Heart left ventricle (tissue), 16 donors: ENCODE measurements at regions of chr17 and their contacts with region 1.

Region 1: DNA sequence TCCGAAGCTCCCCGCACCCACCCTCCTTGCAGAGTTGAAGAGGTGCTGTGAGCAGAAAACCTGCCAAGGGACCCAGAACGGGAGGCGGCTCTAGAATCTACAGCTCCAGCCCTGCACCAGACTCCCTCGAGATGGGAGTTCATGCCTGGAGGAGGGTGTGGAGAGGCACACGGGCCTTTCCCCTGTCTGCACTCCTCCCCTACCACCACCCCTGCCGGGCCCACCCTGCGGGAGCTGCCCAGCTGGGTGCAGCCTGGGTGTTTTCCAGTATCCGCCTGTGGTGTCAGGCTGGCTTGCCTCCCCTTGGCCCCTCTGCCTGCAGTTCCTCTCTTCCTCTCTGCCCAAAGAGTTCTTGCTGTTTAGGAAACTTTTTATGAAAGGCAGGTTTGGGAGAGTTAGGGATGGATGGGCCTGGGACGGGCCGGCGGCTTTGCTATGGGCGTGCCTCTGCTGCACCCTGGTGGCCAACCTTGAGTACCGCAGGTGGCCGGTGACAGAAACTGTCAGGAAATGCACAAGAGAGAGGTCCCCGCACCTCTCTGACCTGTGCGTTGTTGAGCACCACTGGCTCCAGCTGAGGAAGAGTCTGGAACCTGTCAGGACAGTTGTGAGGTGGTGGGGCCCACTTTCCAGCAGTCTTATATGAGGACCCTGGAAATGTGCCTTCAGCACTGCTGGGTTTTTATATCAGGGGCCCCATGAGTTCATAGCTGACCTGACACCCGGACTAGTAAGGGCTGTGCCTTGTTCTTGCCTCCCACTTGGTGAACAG is 354.1 kb downstream of the SEC14L1 start:
- DNase-seq: peak; percentile 72 to 89 (median 78)
- ATAC-seq: peak; percentile 36 to 73 (median 70)
- H3K4me3 ChIP-seq: no peak overlapping the region
- H3K27ac ChIP-seq: peak overlapping the region in 2 of 12 donors; percentile 15 to 76
- H3K4me1 ChIP-seq: peaks cover 0 to 32% (median 18%) of the 10 kb centered on the region in 12 donors
- H3K27me3 ChIP-seq: no peaks in the 10 kb centered on the region
- CTCF ChIP-seq: peak; percentile 97 to 100 (median 98)
- POLR2A ChIP-seq: no peak

Region 2: GRCh38 chr17:77088455-77089123 is 406.3 kb before region 1 on chr17:
- intact Hi-C with region 1: loop called in 2 of 10 experiments (anchors 10 kb)
- DNase-seq: peak; percentile 93 to 95 (median 95)
- ATAC-seq: peak; percentile 94 to 96 (median 94)
- H3K4me3 ChIP-seq: peak overlapping the region; percentile 31 to 94 (median 74)
- H3K27ac ChIP-seq: peak overlapping the region; percentile 69 to 96 (median 89)
- H3K4me1 ChIP-seq: peaks cover 2 to 42% (median 25%) of the 10 kb centered on the region in 12 donors
- H3K27me3 ChIP-seq: peaks cover 0 to 2% (median 0%) of the 10 kb centered on the region in 9 donors
- CTCF ChIP-seq: peak; percentile 59 to 96 (median 81)
- POLR2A ChIP-seq: peak in 1 of 2 donors; percentile 65

Region 3: GRCh38 chr17:77331301-77331864 is 163.5 kb before region 1 on chr17:
- intact Hi-C with region 1: loop called (anchors 1 to 2 kb)
- DNase-seq: peak; percentile 91 to 96 (median 92)
- ATAC-seq: peak; percentile 74 to 92 (median 88)
- H3K4me3 ChIP-seq: peak overlapping the region in 7 of 12 donors; percentile 21 to 45 (median 41)
- H3K27ac ChIP-seq: peak overlapping the region in 9 of 12 donors; percentile 2 to 85 (median 55)
- H3K4me1 ChIP-seq: peaks cover 0 to 31% (median 9%) of the 10 kb centered on the region in 12 donors
- H3K27me3 ChIP-seq: no peaks in the 10 kb centered on the region
- CTCF ChIP-seq: peak; percentile 93 to 98 (median 94)
- POLR2A ChIP-seq: no peak

Region 4: DNA sequence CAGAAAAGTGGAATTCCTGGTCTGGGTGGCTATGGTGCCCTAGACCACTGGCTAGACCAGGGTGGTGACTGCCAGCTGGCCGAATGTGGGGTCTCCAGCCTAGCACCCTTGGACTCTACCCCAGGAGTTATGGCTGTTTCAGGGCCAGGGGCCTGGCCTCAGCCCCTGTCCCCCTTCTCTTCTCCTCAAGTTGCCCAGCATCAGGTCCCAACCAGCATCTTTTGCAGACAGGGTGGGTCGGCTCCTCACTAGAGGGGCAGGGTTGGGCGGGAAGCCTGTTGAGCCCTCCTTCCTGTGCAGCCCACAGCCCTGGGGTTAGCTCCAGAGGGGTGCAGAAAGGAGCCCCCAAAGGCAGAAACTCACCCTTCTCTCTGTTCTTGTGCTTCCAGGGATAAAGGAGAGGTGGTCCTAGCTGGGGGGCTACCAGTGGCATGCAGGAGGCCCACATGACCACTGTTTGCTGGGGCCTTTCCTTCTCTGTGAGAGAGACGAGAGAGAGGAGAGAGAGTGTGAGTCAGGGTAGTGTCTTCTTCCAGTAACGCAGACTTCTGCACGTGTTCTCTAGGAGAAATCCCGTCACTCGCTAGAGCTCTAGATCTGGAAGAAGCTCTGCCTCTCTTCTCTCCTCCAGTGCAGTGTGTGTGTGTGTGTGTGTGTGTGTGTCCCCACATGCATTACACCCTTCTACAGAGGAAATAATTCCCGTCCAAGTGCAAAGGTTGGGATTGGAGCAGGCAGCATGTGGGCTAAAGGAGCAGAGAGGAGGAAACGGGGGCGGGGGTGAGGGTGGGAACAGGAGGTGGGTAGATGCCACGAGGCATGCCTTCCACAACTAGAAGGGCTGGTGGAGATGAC is 144.6 kb before region 1 on chr17:
- intact Hi-C with region 1: loop called in 1 of 10 experiments (anchors 5 kb)
- DNase-seq: peak in 3 of 5 donors; percentile 30 to 55 (median 32)
- ATAC-seq: peak; percentile 3 to 29 (median 28)
- H3K4me3 ChIP-seq: no peak overlapping the region
- H3K27ac ChIP-seq: peak overlapping the region in 8 of 12 donors; percentile 33 to 86 (median 72)
- H3K4me1 ChIP-seq: peaks cover 6 to 56% (median 38%) of the 10 kb centered on the region in 12 donors
- H3K27me3 ChIP-seq: no peaks in the 10 kb centered on the region
- CTCF ChIP-seq: no peak
- POLR2A ChIP-seq: no peak

Region 5: GRCh38 chr17:77419547-77420094 is 75.2 kb before region 1 on chr17:
- intact Hi-C with region 1: no loop called
- DNase-seq: no peak
- ATAC-seq: no peak
- H3K4me3 ChIP-seq: no peak overlapping the region
- H3K27ac ChIP-seq: peak overlapping the region in 10 of 12 donors; percentile 6 to 97 (median 58)
- H3K4me1 ChIP-seq: peaks cover 26 to 64% (median 54%) of the 10 kb centered on the region in 12 donors
- H3K27me3 ChIP-seq: no peaks in the 10 kb centered on the region
- CTCF ChIP-seq: no peak
- POLR2A ChIP-seq: no peak

Region 6: DNA sequence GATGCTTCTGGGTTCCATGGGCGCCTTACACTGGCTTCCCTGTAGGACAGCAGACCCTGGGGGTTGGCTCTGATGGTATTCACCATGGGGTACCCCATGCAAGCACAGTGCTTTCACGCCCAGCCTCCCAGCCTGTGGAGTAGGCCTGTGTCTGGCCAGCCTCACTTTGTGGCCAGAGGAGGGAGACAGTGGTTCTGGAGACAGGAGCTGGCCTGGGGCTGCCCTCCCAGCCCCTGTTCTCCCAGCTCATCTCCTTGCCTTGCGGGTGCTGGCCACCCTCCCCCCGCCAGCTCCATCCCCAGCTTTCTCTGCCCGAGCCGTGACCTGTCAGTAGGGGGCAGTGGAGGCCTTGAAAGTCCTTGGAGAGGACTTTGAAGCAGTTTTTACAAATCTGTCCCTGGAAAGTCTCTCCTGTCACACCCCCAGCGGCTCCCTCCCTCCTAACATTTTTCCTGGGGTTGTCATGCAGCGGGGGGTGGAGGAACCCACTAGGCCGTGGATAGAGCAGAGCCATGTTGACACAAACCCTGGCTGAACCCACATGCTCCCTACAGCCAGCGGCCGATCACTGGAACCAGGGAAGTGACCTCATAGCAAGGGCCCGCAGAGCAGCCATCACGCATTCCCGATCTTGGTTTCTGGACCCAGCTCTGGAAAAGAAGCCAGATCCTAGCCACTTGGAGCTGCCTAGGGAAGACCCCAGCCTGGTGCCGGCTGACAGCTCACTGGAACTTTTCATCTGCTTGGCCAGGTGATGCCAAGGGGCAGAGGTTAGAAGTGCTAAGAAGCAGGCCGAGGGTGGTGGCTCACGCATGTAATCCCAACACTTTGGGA is 64.7 kb before region 1 on chr17:
- intact Hi-C with region 1: loop called (anchors 1 to 2 kb)
- DNase-seq: peak; percentile 92 to 95 (median 94)
- ATAC-seq: peak; percentile 81 to 92 (median 84)
- H3K4me3 ChIP-seq: no peak overlapping the region
- H3K27ac ChIP-seq: peak overlapping the region; percentile 58 to 97 (median 76)
- H3K4me1 ChIP-seq: peaks cover 23 to 98% (median 86%) of the 10 kb centered on the region in 12 donors
- H3K27me3 ChIP-seq: no peaks in the 10 kb centered on the region
- CTCF ChIP-seq: peak; percentile 73 to 95 (median 86)
- POLR2A ChIP-seq: peak in 1 of 2 donors; percentile 14

Region 7: DNA sequence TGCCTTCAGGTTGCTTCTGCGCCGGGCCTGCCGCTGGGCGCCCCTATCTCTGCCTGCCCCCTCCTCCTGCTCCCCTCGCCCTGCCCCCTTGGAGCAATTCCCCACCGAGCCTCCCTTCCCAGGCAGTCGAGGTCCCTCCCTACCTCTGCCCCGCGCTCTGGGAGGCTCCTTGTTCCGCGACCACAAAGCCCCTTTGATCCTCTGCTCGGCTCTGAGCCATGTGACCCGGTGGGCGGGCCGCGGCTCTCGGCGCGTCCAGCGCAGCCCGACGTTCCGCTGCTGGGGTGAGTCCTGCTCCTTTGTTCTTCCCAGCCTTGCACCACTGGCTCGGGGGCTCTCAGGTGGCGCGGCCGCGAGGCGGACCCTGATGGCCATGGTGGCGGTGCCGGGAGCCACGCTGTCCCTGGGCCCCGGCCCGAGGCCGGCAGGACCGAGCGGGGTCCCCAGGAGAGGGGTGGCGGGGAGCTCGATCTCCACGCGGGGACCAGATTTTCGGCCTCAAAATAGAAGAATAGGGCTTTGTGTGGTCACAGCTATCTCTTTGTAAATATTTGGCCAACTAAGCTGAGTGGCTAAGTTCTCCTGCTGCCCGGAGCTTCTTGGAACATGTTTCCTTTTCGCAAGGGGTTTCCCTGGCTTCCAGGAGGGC is 43.5 kb before region 1 on chr17:
- intact Hi-C with region 1: loop called in 2 of 10 experiments (anchors 1 to 5 kb)
- DNase-seq: peak; percentile 78 to 89 (median 83)
- ATAC-seq: peak; percentile 30 to 77 (median 68)
- H3K4me3 ChIP-seq: peak overlapping the region; percentile 20 to 84 (median 60)
- H3K27ac ChIP-seq: peak overlapping the region; percentile 35 to 92 (median 80)
- H3K4me1 ChIP-seq: peaks cover 7 to 98% (median 73%) of the 10 kb centered on the region in 12 donors
- H3K27me3 ChIP-seq: no peaks in the 10 kb centered on the region
- CTCF ChIP-seq: no peak
- POLR2A ChIP-seq: no peak